Mammary epithelial cell (primary cell): ENCODE measurements at regions of chr2 and their contacts with region 1.

Region 1: GRCh38 chr2:70142590-70143313 is 48.1 kb downstream of the C2orf42 start:
- DNase-seq: peak; percentile 99
- H3K4me3 ChIP-seq: peak overlapping the region; percentile 42 to 56 (median 54)
- H3K27ac ChIP-seq: peak overlapping the region; percentile 90
- H3K4me1 ChIP-seq: peaks cover 36% of the 10 kb centered on the region
- H3K27me3 ChIP-seq: no peaks in the 10 kb centered on the region
- CTCF ChIP-seq: peak; percentile 87 to 98

Region 2: GRCh38 chr2:69724540-69725159 is 418.1 kb before region 1 on chr2:
- CTCF ChIA-PET with region 1: no interaction called
- dilution Hi-C with region 1: no loop called
- in situ Hi-C with region 1: no loop called
- intact Hi-C with region 1: loop called (anchors 1 kb)
- DNase-seq: peak; percentile 64
- H3K4me3 ChIP-seq: peak overlapping the region in 1 of 3 experiments; percentile 29
- H3K27ac ChIP-seq: no peak overlapping the region
- H3K4me1 ChIP-seq: no peaks in the 10 kb centered on the region
- H3K27me3 ChIP-seq: no peaks in the 10 kb centered on the region
- CTCF ChIP-seq: peak; percentile 86 to 87

Region 3: DNA sequence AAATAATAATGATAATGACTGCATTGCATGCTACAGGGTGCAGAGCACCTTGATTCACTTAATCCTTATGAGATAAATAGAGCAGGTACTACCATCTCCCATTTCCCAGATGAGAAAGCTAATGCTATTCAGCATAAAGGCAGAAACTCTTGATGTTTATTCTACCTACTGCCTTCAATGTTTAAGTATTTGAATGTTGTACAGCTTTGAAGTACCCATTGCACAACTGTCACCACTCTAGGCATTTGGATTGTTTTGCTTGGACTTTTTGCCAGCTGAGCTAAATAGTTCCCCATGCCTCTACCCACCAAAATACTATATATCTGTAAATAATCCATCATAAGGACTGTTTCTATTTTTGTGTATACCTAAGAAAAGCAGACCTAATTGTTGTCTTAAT is 235.5 kb before region 1 on chr2:
- CTCF ChIA-PET with region 1: no interaction called
- dilution Hi-C with region 1: loop called (anchors 5 kb)
- in situ Hi-C with region 1: loop called in 1 of 2 experiments (anchors 10 kb)
- intact Hi-C with region 1: no loop called
- DNase-seq: no peak
- H3K4me3 ChIP-seq: no peak overlapping the region
- H3K27ac ChIP-seq: no peak overlapping the region
- H3K4me1 ChIP-seq: no peaks in the 10 kb centered on the region
- H3K27me3 ChIP-seq: no peaks in the 10 kb centered on the region
- CTCF ChIP-seq: no peak

Region 4: GRCh38 chr2:69933839-69934613 is 208.7 kb before region 1 on chr2:
- CTCF ChIA-PET with region 1: no interaction called
- dilution Hi-C with region 1: no loop called
- in situ Hi-C with region 1: no loop called
- intact Hi-C with region 1: loop called (anchors 1 kb)
- DNase-seq: peak; percentile 86
- H3K4me3 ChIP-seq: no peak overlapping the region
- H3K27ac ChIP-seq: peak overlapping the region; percentile 73
- H3K4me1 ChIP-seq: peaks cover 18% of the 10 kb centered on the region
- H3K27me3 ChIP-seq: no peaks in the 10 kb centered on the region
- CTCF ChIP-seq: no peak

Region 5: DNA sequence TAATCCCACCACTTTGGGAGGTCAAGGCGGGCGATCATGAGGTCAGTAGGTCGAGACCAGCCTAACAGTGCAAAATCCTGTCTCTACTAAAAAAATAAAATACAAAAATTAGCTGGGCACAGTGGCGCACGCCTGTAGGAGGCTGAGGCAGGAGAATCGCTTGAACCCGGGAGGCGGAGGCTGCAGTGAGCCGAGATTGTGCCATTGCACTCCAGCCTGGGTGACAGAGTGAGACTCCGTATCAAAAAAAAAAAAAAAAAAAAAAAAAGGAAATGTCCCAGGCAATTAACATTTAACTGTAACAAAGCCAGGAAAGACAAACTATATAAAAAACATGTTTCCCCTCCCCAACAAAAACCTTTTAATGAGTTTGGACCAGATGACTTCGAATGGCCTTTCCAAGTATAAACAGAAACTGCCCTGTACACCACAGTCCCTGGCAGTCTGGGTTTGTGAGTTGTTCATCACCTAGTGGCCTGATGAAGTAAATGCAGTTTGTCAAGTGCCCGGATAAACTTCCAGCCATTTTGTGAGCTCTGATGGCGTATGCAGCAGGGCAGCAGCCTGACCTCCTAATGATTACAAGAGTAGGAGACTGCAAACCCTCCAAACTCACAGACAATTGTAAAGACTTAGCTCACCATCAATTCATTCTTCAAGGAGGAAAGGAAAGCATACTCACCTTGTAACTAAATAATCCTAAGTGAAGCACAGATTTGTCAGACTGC is 72.0 kb before region 1 on chr2:
- CTCF ChIA-PET with region 1: no interaction called
- dilution Hi-C with region 1: no loop called
- in situ Hi-C with region 1: no loop called
- intact Hi-C with region 1: loop called (anchors 1 kb)
- DNase-seq: peak; percentile 82
- H3K4me3 ChIP-seq: no peak overlapping the region
- H3K27ac ChIP-seq: peak overlapping the region; percentile 58
- H3K4me1 ChIP-seq: peaks cover 13% of the 10 kb centered on the region
- H3K27me3 ChIP-seq: no peaks in the 10 kb centered on the region
- CTCF ChIP-seq: peak; percentile 94

Region 6: GRCh38 chr2:70124983-70125480 is 17.7 kb before region 1 on chr2:
- CTCF ChIA-PET with region 1: no interaction called
- dilution Hi-C with region 1: no loop called
- in situ Hi-C with region 1: no loop called
- intact Hi-C with region 1: loop called (anchors 1 kb)
- DNase-seq: no peak
- H3K4me3 ChIP-seq: peak overlapping the region; percentile 20 to 57 (median 22)
- H3K27ac ChIP-seq: peak overlapping the region; percentile 12
- H3K4me1 ChIP-seq: peaks cover 19% of the 10 kb centered on the region
- H3K27me3 ChIP-seq: no peaks in the 10 kb centered on the region
- CTCF ChIP-seq: no peak

Region 7: GRCh38 chr2:70190418-70191243 is 47.9 kb after region 1 on chr2 and contains the start of gene C2orf42:
- CTCF ChIA-PET with region 1: no interaction called
- dilution Hi-C with region 1: no loop called
- in situ Hi-C with region 1: no loop called
- intact Hi-C with region 1: loop called (anchors 1 kb)
- DNase-seq: peak; percentile 97
- H3K4me3 ChIP-seq: peak within 1 kb of the TSS; percentile 77 to 84 (median 79)
- H3K27ac ChIP-seq: peak within 1 kb of the TSS; percentile 91
- H3K4me1 ChIP-seq: peaks cover 4% of the 10 kb centered on the region
- H3K27me3 ChIP-seq: no peaks in the 10 kb centered on the region
- CTCF ChIP-seq: no peak
- total RNA-seq, gene C2orf42: 17.3 to 20.2 TPM

Region 8: GRCh38 chr2:70280242-70280798 is 137.6 kb after region 1 on chr2:
- CTCF ChIA-PET with region 1: no interaction called
- dilution Hi-C with region 1: no loop called
- in situ Hi-C with region 1: no loop called
- intact Hi-C with region 1: no loop called
- DNase-seq: no peak
- H3K4me3 ChIP-seq: no peak overlapping the region
- H3K27ac ChIP-seq: no peak overlapping the region
- H3K4me1 ChIP-seq: no peaks in the 10 kb centered on the region
- H3K27me3 ChIP-seq: no peaks in the 10 kb centered on the region
- CTCF ChIP-seq: no peak